ENCODE measurements at regions of chr11 and their contacts with region 1.

Region 1: DNA sequence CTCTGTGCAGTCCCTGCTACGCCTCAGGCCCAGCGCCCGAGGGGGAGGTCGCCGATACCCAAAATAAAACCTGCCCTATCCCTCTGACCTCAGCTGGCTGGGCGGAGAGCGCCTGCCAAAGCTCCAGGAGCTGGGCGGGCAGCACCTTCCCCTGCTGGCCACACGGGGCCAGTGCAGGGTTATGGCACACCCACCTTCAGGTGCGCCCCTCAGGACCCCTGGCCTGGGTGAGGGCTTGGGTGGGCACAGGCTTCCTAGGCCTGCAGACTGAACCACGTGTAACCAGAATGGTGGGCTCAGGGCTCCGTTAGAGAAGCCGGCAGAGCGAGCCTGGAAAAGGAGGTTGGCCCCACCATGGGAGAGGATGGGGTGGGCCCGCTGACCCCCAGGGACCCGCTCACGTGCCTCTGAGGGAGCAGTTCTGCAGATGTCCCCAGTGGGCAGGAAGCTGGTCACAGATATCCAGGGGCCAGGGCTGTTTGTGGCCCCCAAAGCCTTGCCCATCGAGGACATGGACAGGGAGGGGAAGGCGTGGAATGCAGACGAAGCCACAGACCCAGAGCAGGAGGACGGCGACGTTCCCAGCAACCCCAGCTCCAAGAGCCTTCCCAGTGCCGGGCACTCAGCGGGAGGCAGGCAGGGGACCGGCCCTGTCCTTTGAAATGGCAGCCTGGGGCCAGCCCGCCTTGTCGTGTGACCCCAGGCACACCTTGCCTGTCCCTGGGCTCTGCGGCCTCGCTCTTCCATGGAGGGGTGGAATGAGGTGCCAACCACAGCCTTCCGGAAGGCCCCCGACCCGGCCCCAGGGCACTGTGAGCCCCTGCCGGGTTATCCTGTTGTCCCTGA is 1.6 kb upstream of the TNNT3 start:
- DNase-seq: peak in 1 of 2 donors; percentile 77
- ATAC-seq: peak in 1 of 2 donors; percentile 28
- H3K4me3 ChIP-seq: peak overlapping the region in 3 of 4 donors; percentile 16 to 26 (median 20)
- H3K27ac ChIP-seq: peak overlapping the region; percentile 88 to 99 (median 93)
- H3K4me1 ChIP-seq: peaks cover 56 to 67% of the 10 kb centered on the region in 2 donors
- H3K27me3 ChIP-seq: no peaks in the 10 kb centered on the region
- CTCF ChIP-seq: peak; percentile 77 to 96 (median 91)
- POLR2A ChIP-seq: no peak

Region 2: DNA sequence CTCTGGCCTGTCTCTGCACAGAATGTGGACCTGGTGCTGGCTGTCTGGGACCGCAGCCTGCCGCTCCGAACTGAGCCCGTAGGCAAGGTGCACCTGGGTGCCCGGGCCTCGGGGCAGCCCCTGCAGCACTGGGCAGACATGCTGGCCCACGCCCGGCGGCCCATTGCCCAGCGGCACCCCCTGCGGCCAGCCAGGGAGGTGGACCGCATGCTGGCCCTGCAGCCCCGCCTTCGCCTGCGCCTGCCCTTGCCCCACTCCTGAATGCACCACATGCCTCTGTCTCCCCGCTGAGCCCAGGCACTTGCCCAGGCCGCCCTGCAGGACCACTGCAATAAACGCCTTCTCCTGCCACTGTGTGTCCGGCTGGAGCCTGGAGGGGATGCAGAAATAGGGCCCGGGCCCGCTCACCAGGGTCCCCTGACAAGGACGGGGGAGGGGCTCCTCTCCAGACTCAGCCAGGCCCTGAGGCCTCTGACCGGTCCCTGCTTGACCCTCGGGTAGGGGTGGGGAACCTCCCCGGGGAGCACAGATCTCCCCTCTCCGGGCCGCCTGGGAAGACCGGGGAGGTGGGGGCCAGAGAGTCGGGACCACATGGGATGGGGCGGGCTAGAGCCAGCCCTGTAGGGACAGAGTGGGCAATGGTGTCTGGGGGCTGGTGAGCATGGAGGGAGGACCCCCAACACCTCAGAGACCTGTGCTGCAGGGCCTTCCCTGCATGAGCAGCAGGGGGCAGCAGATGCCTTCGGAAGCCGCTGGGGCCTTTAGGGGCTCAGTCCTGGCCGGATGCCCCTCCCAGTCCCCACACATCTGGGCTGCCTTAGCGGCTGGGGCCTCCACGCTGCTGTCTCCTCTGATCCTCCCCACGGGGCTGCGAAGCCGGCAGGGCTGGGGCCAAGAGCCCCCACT is 80.5 kb before region 1 on chr11:
- in situ Hi-C with region 1: no loop called
- intact Hi-C with region 1: loop called (anchors 2 kb)
- DNase-seq: peak in 1 of 2 donors; percentile 65
- ATAC-seq: peak in 1 of 2 donors; percentile 13
- H3K4me3 ChIP-seq: no peak overlapping the region
- H3K27ac ChIP-seq: peak overlapping the region; percentile 88 to 95 (median 92)
- H3K4me1 ChIP-seq: peaks cover 0 to 28% of the 10 kb centered on the region in 2 donors
- H3K27me3 ChIP-seq: no peaks in the 10 kb centered on the region
- CTCF ChIP-seq: peak; percentile 84 to 92 (median 88)
- POLR2A ChIP-seq: no peak

Region 3: GRCh38 chr11:1882519-1883238 is 35.2 kb before region 1 on chr11:
- in situ Hi-C with region 1: no loop called
- intact Hi-C with region 1: loop called (anchors 2 kb)
- DNase-seq: peak; percentile 59 to 81
- ATAC-seq: peak; percentile 85 to 91
- H3K4me3 ChIP-seq: no peak overlapping the region
- H3K27ac ChIP-seq: peak overlapping the region; percentile 84 to 89 (median 88)
- H3K4me1 ChIP-seq: peaks cover 31% of the 10 kb centered on the region in 2 donors
- H3K27me3 ChIP-seq: no peaks in the 10 kb centered on the region
- CTCF ChIP-seq: peak; percentile 86 to 98 (median 97)
- POLR2A ChIP-seq: no peak